ENCODE measurements at regions of chr3 and their contacts with region 1.

Region 1: DNA sequence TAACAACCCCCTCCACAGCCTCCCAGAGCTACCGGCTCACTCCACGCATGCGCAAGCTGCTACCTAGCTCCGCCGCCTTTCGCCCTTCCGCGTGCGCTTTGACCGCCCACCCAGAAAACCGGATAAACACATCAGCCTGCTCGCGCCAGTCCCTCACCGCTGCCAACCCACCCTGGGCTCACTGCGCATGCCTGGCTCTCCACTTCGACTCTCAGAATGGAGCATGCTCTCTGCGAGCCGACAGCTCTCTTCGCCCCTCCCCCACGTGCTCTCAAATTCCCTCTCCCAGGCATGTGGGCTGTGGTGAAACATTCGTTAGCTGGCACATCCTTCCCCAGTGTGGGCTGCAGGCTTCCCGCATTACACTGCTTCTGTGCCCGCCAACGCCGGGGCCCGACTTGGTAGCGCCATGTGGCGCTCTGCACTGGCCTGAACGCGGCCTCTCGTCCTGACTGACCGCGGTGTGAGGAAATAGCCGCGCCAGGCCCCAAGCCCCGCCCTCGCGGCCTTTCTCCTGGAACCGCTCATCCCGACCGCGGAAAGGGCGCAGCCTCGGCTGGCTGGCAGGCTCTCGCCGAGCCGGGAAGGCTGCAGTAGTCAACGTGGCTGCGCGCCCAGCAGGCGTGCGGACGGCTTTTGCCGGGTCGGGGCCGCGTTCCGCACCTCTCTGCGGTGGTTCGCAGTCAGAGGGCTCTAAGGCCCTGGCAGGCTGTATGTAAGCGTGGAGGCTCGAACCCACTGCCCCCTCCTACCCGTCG is 445 bp upstream of the MSL2 start:
- DNase-seq: peak; percentile 100
- H3K4me3 Mint-ChIP-seq: peak overlapping the region; percentile 100
- H3K27ac Mint-ChIP-seq: peak overlapping the region; percentile 94
- H3K4me1 Mint-ChIP-seq: peaks cover 17% of the 10 kb centered on the region
- H3K27me3 Mint-ChIP-seq: peaks cover 2% of the 10 kb centered on the region

Region 2: DNA sequence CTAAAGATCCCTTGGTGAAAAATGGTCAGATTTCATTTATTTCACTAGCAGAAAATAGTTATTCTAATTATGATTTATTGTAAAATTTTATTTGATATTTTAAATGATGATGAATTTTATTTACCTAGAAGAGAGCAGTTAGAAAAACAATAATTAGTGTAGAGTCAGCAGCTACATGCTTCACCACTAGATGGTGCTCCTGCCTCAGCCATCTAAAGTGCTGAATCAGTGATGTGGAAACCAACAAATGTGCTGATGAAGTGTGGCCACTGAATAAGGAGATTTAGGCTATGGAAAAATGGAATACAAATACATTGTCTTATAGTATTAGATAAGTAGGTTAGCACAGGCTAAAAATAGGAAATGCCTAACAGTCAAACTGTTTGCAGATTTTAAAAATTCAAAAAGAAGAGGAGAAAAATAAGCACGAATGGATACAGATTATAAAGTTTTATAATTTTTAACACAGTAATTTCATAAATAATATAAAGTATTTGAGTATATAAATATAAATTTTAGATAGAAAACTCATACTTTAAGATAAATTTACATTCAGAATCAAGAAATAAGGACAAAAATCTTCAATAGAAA is 121.3 kb before region 1 on chr3:
- CTCF ChIA-PET with region 1: no interaction called
- intact Hi-C with region 1: loop called (anchors 1 kb)
- DNase-seq: peak; percentile 87
- H3K4me3 Mint-ChIP-seq: no peak overlapping the region
- H3K27ac Mint-ChIP-seq: no peak overlapping the region
- H3K4me1 Mint-ChIP-seq: peaks cover 4% of the 10 kb centered on the region
- H3K27me3 Mint-ChIP-seq: peaks cover 4% of the 10 kb centered on the region

Region 3: GRCh38 chr3:136186344-136186743 is 10.2 kb before region 1 on chr3:
- CTCF ChIA-PET with region 1: interaction called, 4 read pairs
- intact Hi-C with region 1: loop called (anchors 1 kb)
- DNase-seq: peak; percentile 50
- H3K4me3 Mint-ChIP-seq: no peak overlapping the region
- H3K27ac Mint-ChIP-seq: no peak overlapping the region
- H3K4me1 Mint-ChIP-seq: peaks cover 91% of the 10 kb centered on the region
- H3K27me3 Mint-ChIP-seq: no peaks in the 10 kb centered on the region

Region 4: GRCh38 chr3:136390574-136390973 is 194.0 kb after region 1 on chr3:
- CTCF ChIA-PET with region 1: interaction called, 3 read pairs
- intact Hi-C with region 1: loop called (anchors 2 kb)
- DNase-seq: no peak
- H3K4me3 Mint-ChIP-seq: no peak overlapping the region
- H3K27ac Mint-ChIP-seq: no peak overlapping the region
- H3K4me1 Mint-ChIP-seq: no peaks in the 10 kb centered on the region
- H3K27me3 Mint-ChIP-seq: no peaks in the 10 kb centered on the region

Region 5: DNA sequence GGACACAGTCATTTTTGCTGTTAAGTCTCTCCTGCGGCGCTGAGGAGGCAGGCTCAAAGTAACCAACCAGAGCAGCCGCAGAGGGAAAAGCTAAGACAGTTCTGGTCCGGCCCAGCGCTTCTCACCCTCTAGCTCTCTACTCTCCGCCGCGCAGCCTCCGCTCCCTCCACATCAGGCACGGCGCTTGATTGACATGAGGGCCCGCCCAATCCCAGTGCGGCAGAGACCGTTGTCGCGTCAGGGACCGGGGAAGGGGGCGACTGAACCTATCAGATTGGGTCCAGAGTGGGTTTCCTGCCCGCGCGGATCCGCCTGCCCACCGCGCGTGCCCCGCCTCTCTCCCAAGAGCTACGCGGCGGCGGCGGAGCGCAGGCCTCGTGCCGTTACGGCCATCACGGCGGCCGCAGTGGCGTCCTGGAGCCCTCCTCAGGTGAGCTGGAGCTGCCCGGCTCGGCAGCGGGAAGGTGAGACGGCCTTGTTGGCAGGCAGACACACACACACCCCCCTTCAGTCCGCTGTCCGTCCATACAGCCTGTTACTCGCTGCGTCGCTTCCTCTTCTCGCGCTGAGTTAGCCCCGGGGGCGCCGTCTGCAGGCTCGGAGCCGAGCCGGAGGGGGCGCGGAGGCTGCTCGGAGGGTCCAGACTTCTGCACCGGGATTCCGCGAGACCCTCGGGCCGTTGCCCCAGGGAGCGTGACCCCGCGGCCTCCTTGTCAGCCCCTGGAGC is 665.5 kb after region 1 on chr3 and contains the start of gene NCK1:
- CTCF ChIA-PET with region 1: no interaction called
- intact Hi-C with region 1: loop called (anchors 1 kb)
- DNase-seq: peak; percentile 99
- H3K4me3 Mint-ChIP-seq: peak within 1 kb of the TSS; percentile 94
- H3K27ac Mint-ChIP-seq: peak within 1 kb of the TSS; percentile 95
- H3K4me1 Mint-ChIP-seq: peaks cover 41% of the 10 kb centered on the region
- H3K27me3 Mint-ChIP-seq: no peaks in the 10 kb centered on the region
- total RNA-seq, gene NCK1: 24.1 to 29.2 TPM